Naive thymus-derived CD4-positive, alpha-beta T cell (primary cell): ENCODE measurements at regions of chr1 and their contacts with region 1.

Region 1: GRCh38 chr1:226186124-226187018 is at the start of gene ACBD3:
- DNase-seq: peak; percentile 66 to 87 (median 83)
- ATAC-seq: peak; percentile 96
- H3K4me3 ChIP-seq: peak within 1 kb of the TSS; percentile 97
- H3K4me3 Mint-ChIP-seq: peak within 1 kb of the TSS; percentile 91 to 99 (median 94)
- H3K27ac ChIP-seq: peak within 1 kb of the TSS; percentile 84
- H3K27ac Mint-ChIP-seq: peak within 1 kb of the TSS; percentile 88 to 98 (median 94)
- H3K4me1 ChIP-seq: peaks cover 23 to 30% of the 10 kb centered on the region in 2 donors
- H3K4me1 Mint-ChIP-seq: peaks cover 28 to 44% (median 36%) of the 10 kb centered on the region in 7 donors
- H3K27me3 ChIP-seq: no peaks in the 10 kb centered on the region
- H3K27me3 Mint-ChIP-seq: no peaks in the 10 kb centered on the region
- total RNA-seq, gene ACBD3: 19.6 to 29.9 (median 26.1) TPM

Region 2: DNA sequence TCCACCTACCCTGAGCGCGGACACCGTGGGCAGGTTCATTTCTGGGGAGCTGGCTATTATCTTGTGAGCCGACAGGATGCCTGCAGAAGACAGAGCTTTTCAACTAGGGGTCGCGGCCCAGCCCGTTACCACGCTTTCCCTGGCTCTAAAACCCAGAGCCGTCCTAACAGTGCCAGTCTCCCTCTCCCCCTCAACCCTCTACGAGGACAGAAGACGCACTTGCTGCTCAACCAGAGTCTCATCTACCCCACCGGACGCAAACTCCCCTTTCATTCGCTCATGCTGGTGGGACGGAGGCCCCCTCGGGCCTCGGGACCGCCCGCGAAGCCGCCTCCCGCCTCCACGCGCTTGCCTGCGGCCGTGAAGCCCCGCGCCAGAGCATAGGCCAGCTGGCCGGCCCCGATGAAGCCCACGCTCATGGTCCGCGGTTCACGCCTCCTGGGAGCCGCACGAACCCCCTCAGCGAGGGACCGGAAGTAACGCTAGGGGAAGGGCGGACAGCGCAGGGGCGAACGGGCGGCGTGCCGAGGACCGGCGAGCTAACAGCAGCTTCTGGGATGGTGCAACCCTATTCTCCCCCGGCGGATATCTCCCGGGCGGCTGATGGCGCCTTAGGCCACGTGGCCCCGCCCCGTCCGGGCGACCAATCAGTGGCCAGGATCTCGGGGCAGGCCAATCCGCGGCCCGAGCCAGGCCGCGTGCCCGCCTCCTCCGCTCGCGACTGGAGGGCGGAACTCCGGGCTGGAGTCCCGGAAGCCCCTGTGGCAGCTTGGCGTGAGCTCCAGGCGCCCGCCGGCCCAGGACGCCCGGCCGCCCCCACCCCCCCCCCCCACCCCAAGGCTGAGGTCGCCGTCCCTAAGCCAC is 262.4 kb before region 1 on chr1 and contains the start of gene PYCR2:
- CTCF ChIA-PET with region 1: no interaction called
- POLR2A ChIA-PET with region 1: no interaction called
- intact Hi-C with region 1: loop called in 1 of 2 experiments (anchors 5 kb)
- DNase-seq: peak; percentile 92 to 97 (median 94)
- ATAC-seq: peak; percentile 99
- H3K4me3 ChIP-seq: peak within 1 kb of the TSS; percentile 100
- H3K4me3 Mint-ChIP-seq: peak within 1 kb of the TSS; percentile 86 to 98 (median 94)
- H3K27ac ChIP-seq: peak within 1 kb of the TSS; percentile 95
- H3K27ac Mint-ChIP-seq: peak within 1 kb of the TSS; percentile 90 to 98 (median 95)
- H3K4me1 ChIP-seq: peaks cover 11 to 65% of the 10 kb centered on the region in 2 donors
- H3K4me1 Mint-ChIP-seq: peaks cover 45 to 75% (median 60%) of the 10 kb centered on the region in 7 donors
- H3K27me3 ChIP-seq: no peaks in the 10 kb centered on the region
- H3K27me3 Mint-ChIP-seq: no peaks in the 10 kb centered on the region
- total RNA-seq, gene PYCR2: 46.4 to 137 (median 109) TPM

Region 3: DNA sequence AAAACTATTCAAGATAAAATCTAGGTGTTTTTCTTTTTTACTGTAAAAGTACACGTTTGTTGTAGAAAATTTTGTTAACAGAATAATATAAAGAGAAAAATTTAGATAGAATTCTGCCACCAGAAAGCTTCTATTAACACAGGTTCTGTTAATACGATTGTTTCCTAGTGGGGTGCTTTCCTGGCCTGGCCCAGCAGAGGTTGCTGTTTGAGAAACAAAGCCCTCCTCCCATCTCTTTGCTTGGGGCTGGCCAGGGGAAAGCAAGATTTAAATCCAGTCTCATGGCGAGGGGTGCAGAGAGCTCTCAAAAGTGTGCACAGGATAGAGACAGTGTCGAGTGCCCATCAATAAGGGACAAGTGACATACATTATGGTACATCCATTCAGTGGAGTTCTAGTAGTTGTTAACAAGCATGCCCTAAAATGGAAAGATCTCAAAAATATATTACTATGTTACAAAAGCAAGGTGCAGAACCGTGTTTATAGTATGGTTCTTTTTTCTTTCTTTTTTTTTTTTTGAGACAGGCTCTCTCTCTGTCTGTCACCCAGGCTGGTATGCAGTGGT is 14.7 kb after region 1 on chr1:
- CTCF ChIA-PET with region 1: interaction called, 5 read pairs
- POLR2A ChIA-PET with region 1: interaction called, 3 read pairs
- intact Hi-C with region 1: loop called in 1 of 2 experiments (anchors 1 kb)
- DNase-seq: no peak
- ATAC-seq: no peak
- H3K4me3 ChIP-seq: no peak overlapping the region
- H3K4me3 Mint-ChIP-seq: no peak overlapping the region
- H3K27ac ChIP-seq: no peak overlapping the region
- H3K27ac Mint-ChIP-seq: no peak overlapping the region
- H3K4me1 ChIP-seq: no peaks in the 10 kb centered on the region
- H3K4me1 Mint-ChIP-seq: peaks cover 0 to 5% (median 0%) of the 10 kb centered on the region in 7 donors
- H3K27me3 ChIP-seq: no peaks in the 10 kb centered on the region
- H3K27me3 Mint-ChIP-seq: peaks cover 0 to 18% (median 4%) of the 10 kb centered on the region in 5 donors

Region 4: GRCh38 chr1:226407497-226408284 is 221.3 kb after region 1 on chr1 and contains the start of gene PARP1:
- CTCF ChIA-PET with region 1: no interaction called
- POLR2A ChIA-PET with region 1: no interaction called
- intact Hi-C with region 1: loop called (anchors 1 to 10 kb)
- DNase-seq: peak; percentile 83 to 93 (median 89)
- ATAC-seq: peak; percentile 94
- H3K4me3 ChIP-seq: peak within 1 kb of the TSS; percentile 82
- H3K4me3 Mint-ChIP-seq: peak within 1 kb of the TSS; percentile 89 to 99 (median 94)
- H3K27ac ChIP-seq: peak within 1 kb of the TSS; percentile 74
- H3K27ac Mint-ChIP-seq: peak within 1 kb of the TSS; percentile 68 to 96 (median 93)
- H3K4me1 ChIP-seq: peaks cover 23 to 30% of the 10 kb centered on the region in 2 donors
- H3K4me1 Mint-ChIP-seq: peaks cover 37 to 46% (median 40%) of the 10 kb centered on the region in 7 donors
- H3K27me3 ChIP-seq: no peaks in the 10 kb centered on the region
- H3K27me3 Mint-ChIP-seq: peaks cover 0 to 3% (median 0%) of the 10 kb centered on the region in 5 donors
- total RNA-seq, gene PARP1: 63.6 to 165 (median 89.3) TPM

Region 5: GRCh38 chr1:226882631-226883409 is 696.4 kb after region 1 on chr1:
- CTCF ChIA-PET with region 1: no interaction called
- POLR2A ChIA-PET with region 1: no interaction called
- intact Hi-C with region 1: no loop called
- DNase-seq: peak in 8 of 9 donors; percentile 31 to 65 (median 52)
- ATAC-seq: peak; percentile 79
- H3K4me3 ChIP-seq: peak overlapping the region; percentile 48
- H3K4me3 Mint-ChIP-seq: peak overlapping the region; percentile 65 to 88 (median 80)
- H3K27ac ChIP-seq: peak overlapping the region; percentile 73
- H3K27ac Mint-ChIP-seq: peak overlapping the region; percentile 85 to 98 (median 91)
- H3K4me1 ChIP-seq: peaks cover 4 to 34% of the 10 kb centered on the region in 2 donors
- H3K4me1 Mint-ChIP-seq: peaks cover 44 to 57% (median 51%) of the 10 kb centered on the region in 7 donors
- H3K27me3 ChIP-seq: no peaks in the 10 kb centered on the region
- H3K27me3 Mint-ChIP-seq: no peaks in the 10 kb centered on the region